Activated CD4-positive, alpha-beta memory T cell treated with anti-CD3 and anti-CD28 coated beads for 36 hours (primary cell): ENCODE measurements at regions of chr12 and their contacts with region 1.

Region 1: DNA sequence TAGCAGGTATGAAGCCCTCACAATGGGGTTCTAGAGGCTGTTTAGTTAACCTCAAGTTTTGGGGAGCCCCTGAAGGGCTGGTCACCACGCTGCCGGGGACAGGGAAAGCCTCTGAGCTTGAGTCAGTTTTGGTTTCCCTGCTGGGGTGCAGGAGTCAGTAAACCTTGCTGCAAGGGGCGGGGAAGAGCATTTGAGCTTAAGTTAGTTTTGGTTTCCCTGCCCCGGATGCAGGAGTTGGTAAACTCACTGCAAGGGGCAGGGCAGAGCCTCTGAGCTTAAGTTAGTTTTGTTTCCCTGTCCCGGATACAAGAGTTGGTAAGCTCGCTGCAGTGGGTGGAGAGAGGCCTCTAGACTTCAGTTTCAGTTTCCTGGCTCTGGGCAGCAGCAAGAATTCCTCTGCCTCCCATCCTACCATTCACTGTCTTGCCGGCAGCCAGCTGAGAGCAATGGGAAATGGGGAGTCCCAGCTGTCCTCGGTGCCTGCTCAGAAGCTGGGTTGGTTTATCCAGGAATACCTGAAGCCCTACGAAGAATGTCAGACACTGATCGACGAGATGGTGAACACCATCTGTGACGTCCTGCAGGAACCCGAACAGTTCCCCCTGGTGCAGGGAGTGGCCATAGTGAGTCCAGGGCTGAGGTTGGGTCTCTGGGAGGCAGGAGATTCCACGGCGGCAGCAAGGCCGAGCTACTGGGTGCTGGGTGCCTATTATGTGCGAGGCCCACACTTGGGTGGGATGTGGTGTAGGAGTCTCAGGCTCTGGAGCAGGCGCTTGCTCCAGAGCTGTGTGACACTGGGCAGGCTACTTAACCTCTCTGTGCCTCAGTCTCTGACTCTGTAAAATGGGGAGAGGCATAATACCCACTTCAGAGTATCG is at the start of gene OAS2:
- DNase-seq: peak; percentile 91
- H3K4me3 Mint-ChIP-seq: peak within 1 kb of the TSS; percentile 81
- H3K27ac Mint-ChIP-seq: peak within 1 kb of the TSS; percentile 100
- H3K4me1 Mint-ChIP-seq: peaks cover 24% of the 10 kb centered on the region
- H3K27me3 Mint-ChIP-seq: no peaks in the 10 kb centered on the region
- total RNA-seq, gene OAS2: 140 to 148 TPM

Region 2: DNA sequence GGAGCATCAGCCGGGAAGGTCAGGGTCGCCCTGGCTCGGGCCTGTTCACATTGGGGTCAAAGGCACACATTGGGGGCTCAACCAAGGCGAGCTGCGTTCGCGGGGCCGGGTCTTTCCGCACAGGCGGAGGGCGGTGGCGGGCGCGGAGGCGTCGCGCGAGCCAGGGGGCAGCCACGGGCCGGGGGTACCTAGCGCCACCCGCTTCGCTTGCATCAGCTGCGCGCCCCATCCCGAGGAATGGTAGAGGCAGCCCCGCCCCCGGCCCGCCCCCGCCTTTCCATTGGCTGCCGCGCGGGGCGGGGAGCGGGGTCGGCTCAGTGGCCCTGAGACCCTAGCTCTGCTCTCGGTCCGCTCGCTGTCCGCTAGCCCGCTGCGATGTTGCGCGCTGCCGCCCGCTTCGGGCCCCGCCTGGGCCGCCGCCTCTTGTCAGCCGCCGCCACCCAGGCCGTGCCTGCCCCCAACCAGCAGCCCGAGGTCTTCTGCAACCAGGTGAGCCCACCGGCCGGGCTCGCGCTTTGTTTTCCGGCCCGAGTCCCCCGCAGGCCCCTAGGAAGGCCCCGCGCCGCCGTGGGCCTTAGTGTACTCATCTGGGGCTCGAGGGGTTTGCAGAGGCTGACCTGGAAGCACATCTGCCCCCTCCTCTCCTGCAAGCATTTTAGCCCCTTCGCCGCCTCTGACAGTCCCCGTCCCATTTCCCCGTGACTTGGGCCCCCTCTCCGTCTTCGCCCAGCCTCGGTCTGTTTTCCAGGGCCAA is 1211.6 kb before region 1 on chr12 and contains the start of gene ALDH2:
- CTCF ChIA-PET with region 1: no interaction called
- POLR2A ChIA-PET with region 1: no interaction called
- intact Hi-C with region 1: loop called (anchors 10 kb)
- DNase-seq: peak; percentile 36
- H3K4me3 Mint-ChIP-seq: peak within 1 kb of the TSS; percentile 56
- H3K27ac Mint-ChIP-seq: no peak within 1 kb of the TSS
- H3K4me1 Mint-ChIP-seq: peaks cover 12% of the 10 kb centered on the region
- H3K27me3 Mint-ChIP-seq: peaks cover 43% of the 10 kb centered on the region
- total RNA-seq, gene ALDH2: 1.9 to 3.1 TPM

Region 3: DNA sequence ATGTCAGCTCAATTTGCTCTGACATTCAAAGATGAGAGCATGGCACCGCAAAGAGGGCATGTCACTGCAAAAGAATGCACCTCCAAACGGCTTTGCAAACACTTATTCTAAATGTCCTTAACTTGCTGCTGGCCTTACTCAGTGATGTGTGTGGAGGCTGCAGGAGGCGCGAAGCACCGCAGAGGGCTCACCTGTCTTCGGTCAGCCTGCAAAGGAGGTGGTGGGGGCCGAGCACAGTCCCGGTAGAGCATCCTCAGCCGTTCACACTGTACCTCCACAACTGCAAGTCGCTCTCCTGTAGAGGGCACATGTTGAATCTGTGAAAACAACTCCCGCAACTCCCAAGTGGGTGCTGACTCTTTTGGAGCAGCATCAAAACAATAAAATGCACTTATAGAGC is 759.2 kb before region 1 on chr12:
- CTCF ChIA-PET with region 1: no interaction called
- POLR2A ChIA-PET with region 1: no interaction called
- intact Hi-C with region 1: no loop called
- DNase-seq: no peak
- H3K4me3 Mint-ChIP-seq: no peak overlapping the region
- H3K27ac Mint-ChIP-seq: no peak overlapping the region
- H3K4me1 Mint-ChIP-seq: no peaks in the 10 kb centered on the region
- H3K27me3 Mint-ChIP-seq: no peaks in the 10 kb centered on the region

Region 4: DNA sequence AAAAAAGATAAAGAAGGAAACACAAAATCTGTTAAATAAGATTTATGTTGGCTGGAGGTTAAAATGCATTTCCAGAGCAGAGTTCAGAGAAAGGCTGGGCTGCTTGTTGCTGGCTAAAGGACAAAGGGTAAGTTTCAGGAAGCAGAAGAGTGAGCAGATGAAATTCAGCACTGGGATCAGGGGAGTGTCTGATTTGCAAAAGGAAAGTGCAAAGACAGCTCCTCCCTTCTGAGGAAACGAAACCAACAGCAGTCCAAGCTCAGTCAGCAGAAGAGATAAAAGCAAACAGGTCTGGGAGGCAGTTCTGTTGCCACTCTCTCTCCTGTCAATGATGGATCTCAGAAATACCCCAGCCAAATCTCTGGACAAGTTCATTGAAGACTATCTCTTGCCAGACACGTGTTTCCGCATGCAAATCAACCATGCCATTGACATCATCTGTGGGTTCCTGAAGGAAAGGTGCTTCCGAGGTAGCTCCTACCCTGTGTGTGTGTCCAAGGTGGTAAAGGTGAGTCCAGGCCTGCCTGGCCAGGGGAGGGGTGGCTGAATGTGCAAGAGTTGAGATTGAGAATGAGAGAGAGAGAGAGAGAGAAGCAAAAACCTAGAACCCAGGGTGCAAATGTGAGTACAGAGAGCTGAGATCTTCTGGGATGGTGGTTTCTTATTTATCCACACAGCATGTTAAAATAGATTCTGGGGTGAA is 71.5 kb before region 1 on chr12 and contains the start of gene OAS1:
- CTCF ChIA-PET with region 1: interaction called, 10 read pairs
- POLR2A ChIA-PET with region 1: interaction called, 39 read pairs
- intact Hi-C with region 1: loop called (anchors 1 kb)
- DNase-seq: peak; percentile 58
- H3K4me3 Mint-ChIP-seq: peak within 1 kb of the TSS; percentile 89
- H3K27ac Mint-ChIP-seq: peak within 1 kb of the TSS; percentile 89
- H3K4me1 Mint-ChIP-seq: peaks cover 58% of the 10 kb centered on the region
- H3K27me3 Mint-ChIP-seq: no peaks in the 10 kb centered on the region
- total RNA-seq, gene OAS1: 46.0 to 49.1 TPM

Region 5: GRCh38 chr12:113019041-113019440 is 40.6 kb after region 1 on chr12:
- CTCF ChIA-PET with region 1: no interaction called
- POLR2A ChIA-PET with region 1: no interaction called
- intact Hi-C with region 1: no loop called
- DNase-seq: no peak
- H3K4me3 Mint-ChIP-seq: no peak overlapping the region
- H3K27ac Mint-ChIP-seq: no peak overlapping the region
- H3K4me1 Mint-ChIP-seq: peaks cover 8% of the 10 kb centered on the region
- H3K27me3 Mint-ChIP-seq: no peaks in the 10 kb centered on the region